CD4-positive, alpha-beta T cell (primary cell): ENCODE measurements at regions of chr6 and their contacts with region 1.

Region 1: GRCh38 chr6:38493931-38494547 is 145.7 kb downstream of the BTBD9 start:
- DNase-seq: peak; percentile 51 to 84 (median 75)
- ATAC-seq: peak; percentile 58
- H3K4me3 ChIP-seq: no peak overlapping the region
- H3K4me3 Mint-ChIP-seq: no peak overlapping the region
- H3K27ac ChIP-seq: no peak overlapping the region
- H3K27ac Mint-ChIP-seq: no peak overlapping the region
- H3K4me1 ChIP-seq: no peaks in the 10 kb centered on the region
- H3K4me1 Mint-ChIP-seq: peaks cover 6% of the 10 kb centered on the region
- H3K27me3 ChIP-seq: no peaks in the 10 kb centered on the region
- H3K27me3 Mint-ChIP-seq: no peaks in the 10 kb centered on the region
- CTCF ChIP-seq: peak; percentile 96

Region 2: DNA sequence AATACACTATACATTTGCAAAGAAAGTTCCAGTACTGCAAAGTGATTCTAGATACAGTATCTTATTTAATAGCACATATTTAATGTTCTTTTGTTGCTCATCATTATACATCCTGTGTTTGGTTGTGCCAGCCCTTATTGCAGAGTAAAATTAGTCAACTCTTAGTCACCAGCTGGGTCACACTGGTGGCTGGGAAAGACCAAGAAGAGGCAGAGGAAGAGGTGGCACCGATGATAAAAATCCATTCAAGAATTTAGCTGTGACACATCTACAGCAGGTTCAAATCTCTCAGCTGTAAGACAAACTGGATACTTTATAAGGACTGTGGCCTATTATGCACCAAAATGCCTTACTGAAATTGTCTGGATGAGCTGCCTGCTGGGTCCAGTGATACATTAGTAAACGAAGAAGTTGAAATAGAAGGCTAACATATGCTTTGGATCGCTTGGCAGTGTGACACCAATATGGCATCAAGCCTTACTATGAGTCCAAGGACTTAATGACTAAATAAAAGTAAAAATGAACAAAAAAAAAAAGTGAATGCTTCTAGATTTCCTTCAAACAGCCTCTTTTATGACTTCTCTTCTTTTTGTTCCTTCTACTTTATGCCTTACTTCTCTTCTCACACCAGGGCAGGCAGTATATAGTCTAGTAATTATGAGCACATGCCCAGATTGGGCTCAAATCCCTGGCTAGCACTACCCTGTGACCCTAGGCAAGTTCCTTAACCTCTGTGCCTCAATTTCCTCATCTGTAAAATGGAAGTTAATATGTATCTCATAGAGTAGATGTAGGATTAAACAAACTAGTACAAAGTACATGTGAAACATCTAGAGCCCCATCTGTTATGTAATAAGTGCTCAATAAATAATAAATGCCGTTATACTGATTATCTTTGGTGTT is 1169.7 kb before region 1 on chr6:
- CTCF ChIA-PET with region 1: interaction called, 3 read pairs
- POLR2A ChIA-PET with region 1: no interaction called
- intact Hi-C with region 1: loop called in 1 of 2 experiments (anchors 5 kb)
- DNase-seq: peak in 2 of 14 experiments; percentile 7 to 8
- ATAC-seq: no peak
- H3K4me3 ChIP-seq: no peak overlapping the region
- H3K4me3 Mint-ChIP-seq: no peak overlapping the region
- H3K27ac ChIP-seq: no peak overlapping the region
- H3K27ac Mint-ChIP-seq: peak overlapping the region; percentile 16
- H3K4me1 ChIP-seq: no peaks in the 10 kb centered on the region
- H3K4me1 Mint-ChIP-seq: no peaks in the 10 kb centered on the region
- H3K27me3 ChIP-seq: no peaks in the 10 kb centered on the region
- H3K27me3 Mint-ChIP-seq: no peaks in the 10 kb centered on the region
- CTCF ChIP-seq: no peak

Region 3: DNA sequence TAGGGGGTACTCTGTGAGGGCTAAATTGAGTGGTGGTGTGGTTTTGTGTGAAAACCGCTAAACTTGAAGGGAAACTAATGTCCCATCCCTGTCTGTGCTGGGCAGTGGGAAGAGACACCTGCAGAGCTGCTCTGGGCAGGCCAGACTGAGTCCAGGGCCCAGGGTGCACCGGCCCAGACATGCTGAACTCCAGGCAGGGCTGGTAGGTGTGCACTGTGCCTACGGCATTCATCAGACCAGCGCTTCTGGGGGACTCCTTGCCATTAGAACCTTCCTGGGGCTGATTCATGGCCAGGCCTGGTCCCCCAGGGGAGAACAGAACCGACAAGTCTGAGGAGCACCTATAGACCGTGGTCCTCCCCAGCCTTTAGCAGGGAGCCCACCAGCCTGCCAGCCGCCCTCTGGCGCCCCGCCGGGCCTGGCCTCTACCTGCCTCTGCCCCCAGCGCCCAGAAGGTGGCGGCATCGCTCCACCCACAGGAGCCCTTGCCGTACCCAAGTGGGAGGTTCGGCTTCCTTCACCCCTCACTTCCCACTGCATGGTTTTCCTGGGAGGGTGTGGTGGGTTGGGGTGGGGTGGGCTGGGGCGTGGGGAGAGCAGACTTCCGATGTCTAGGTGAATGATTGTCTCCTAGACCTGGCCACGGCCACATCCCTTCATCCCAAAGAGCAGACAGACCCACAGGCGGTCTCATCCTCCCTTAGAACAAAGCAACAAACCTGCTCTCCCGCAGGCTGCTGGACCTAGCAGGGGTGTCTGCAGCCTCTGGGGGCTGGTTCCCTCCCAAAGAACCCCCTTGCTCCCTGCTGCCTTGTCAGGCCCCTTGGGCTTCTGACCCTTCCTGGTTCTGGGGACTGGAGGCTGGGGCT is 1009.9 kb before region 1 on chr6:
- CTCF ChIA-PET with region 1: no interaction called
- POLR2A ChIA-PET with region 1: no interaction called
- intact Hi-C with region 1: loop called in 1 of 2 experiments (anchors 5 kb)
- DNase-seq: peak; percentile 62 to 89 (median 76)
- ATAC-seq: peak; percentile 65
- H3K4me3 ChIP-seq: no peak overlapping the region
- H3K4me3 Mint-ChIP-seq: no peak overlapping the region
- H3K27ac ChIP-seq: peak overlapping the region in 1 of 2 donors; percentile 50
- H3K27ac Mint-ChIP-seq: no peak overlapping the region
- H3K4me1 ChIP-seq: peaks cover 40% of the 10 kb centered on the region
- H3K4me1 Mint-ChIP-seq: peaks cover 14% of the 10 kb centered on the region
- H3K27me3 ChIP-seq: no peaks in the 10 kb centered on the region
- H3K27me3 Mint-ChIP-seq: no peaks in the 10 kb centered on the region
- CTCF ChIP-seq: peak; percentile 84

Region 4: GRCh38 chr6:37691904-37692806 is 801.9 kb before region 1 on chr6:
- CTCF ChIA-PET with region 1: no interaction called
- POLR2A ChIA-PET with region 1: no interaction called
- intact Hi-C with region 1: loop called in 1 of 2 experiments (anchors 5 kb)
- DNase-seq: peak; percentile 53 to 86 (median 76)
- ATAC-seq: peak; percentile 91
- H3K4me3 ChIP-seq: no peak overlapping the region
- H3K4me3 Mint-ChIP-seq: no peak overlapping the region
- H3K27ac ChIP-seq: no peak overlapping the region
- H3K27ac Mint-ChIP-seq: no peak overlapping the region
- H3K4me1 ChIP-seq: peaks cover 33% of the 10 kb centered on the region
- H3K4me1 Mint-ChIP-seq: peaks cover 12% of the 10 kb centered on the region
- H3K27me3 ChIP-seq: peaks cover 16 to 30% of the 10 kb centered on the region in 2 experiments
- H3K27me3 Mint-ChIP-seq: peaks cover 53% of the 10 kb centered on the region
- CTCF ChIP-seq: peak; percentile 90

Region 5: GRCh38 chr6:37791156-37791919 is 702.7 kb before region 1 on chr6:
- CTCF ChIA-PET with region 1: no interaction called
- POLR2A ChIA-PET with region 1: no interaction called
- intact Hi-C with region 1: loop called (anchors 2 kb)
- DNase-seq: peak; percentile 56 to 86 (median 74)
- ATAC-seq: peak; percentile 100
- H3K4me3 ChIP-seq: no peak overlapping the region
- H3K4me3 Mint-ChIP-seq: no peak overlapping the region
- H3K27ac ChIP-seq: no peak overlapping the region
- H3K27ac Mint-ChIP-seq: no peak overlapping the region
- H3K4me1 ChIP-seq: peaks cover 8% of the 10 kb centered on the region
- H3K4me1 Mint-ChIP-seq: no peaks in the 10 kb centered on the region
- H3K27me3 ChIP-seq: no peaks in the 10 kb centered on the region
- H3K27me3 Mint-ChIP-seq: no peaks in the 10 kb centered on the region
- CTCF ChIP-seq: peak; percentile 91